GM12878 (cell line): ENCODE measurements at regions of chr13 and their contacts with region 1.

Region 1: GRCh38 chr13:110455941-110456340 is 105.6 kb downstream of the RAB20 start:
- DNase-seq: no peak
- ATAC-seq: peak; percentile 99
- H3K4me3 ChIP-seq: 0 out of 2 replicates have a peak overlapping the region, but pooled peaks have one; percentile 18
- H3K27ac ChIP-seq: no peak overlapping the region
- H3K4me1 ChIP-seq: peaks cover 4% of the 10 kb centered on the region; the same call in 1 of the 2 replicates
- H3K27me3 ChIP-seq: no peaks in the 10 kb centered on the region
- CTCF ChIP-seq: peak; percentile 91 to 95 (median 95); a peak in 5 of 6 replicates
- EP300 ChIP-seq: no peak
- POLR2A ChIP-seq: no peak
- RAD21 ChIP-seq: peak; percentile 95

Region 2: DNA sequence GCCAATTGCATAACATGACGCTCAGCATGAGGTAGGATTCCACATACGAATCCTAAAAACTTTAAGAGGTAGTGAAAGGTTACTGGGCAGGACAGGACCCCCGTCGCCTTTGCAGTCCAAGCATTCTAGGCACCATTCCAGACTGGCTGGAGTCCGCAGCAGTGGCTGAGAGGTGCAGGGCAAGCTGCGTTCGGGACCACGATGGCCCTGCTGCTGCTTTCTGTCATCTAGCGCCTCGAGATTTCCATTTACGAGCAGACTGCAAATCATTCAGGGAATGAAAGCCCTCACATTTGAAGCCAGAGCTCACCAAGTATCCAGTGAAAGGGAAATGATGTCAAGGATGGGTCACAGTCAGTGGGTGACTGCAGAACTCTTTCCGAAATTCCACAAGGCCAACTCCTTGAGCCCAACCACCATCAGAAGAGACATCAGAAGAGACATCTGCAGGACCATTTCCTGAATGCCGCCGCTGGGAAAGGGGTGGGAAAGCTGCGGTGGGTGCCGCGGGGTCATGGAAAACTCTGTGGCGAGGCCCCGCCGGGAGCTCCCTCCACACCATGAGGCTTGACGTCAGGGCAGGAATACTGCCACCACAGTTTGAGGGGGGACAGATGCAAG is 237.2 kb before region 1 on chr13:
- CTCF ChIA-PET with region 1: interaction called, 9 read pairs
- POLR2A ChIA-PET with region 1: no interaction called
- RAD21 ChIA-PET with region 1: interaction called, 15 read pairs
- SMC1A ChIA-PET with region 1: interaction called, 6 read pairs
- in situ Hi-C with region 1: no loop called
- intact Hi-C with region 1: no loop called
- DNase-seq: no peak
- ATAC-seq: no peak
- H3K4me3 ChIP-seq: no peak overlapping the region
- H3K27ac ChIP-seq: no peak overlapping the region
- H3K4me1 ChIP-seq: no peaks in the 10 kb centered on the region
- H3K27me3 ChIP-seq: peaks cover 0 to 3% of the 10 kb centered on the region in 2 experiments; a peak in 2 of 4 replicates
- CTCF ChIP-seq: no peak
- EP300 ChIP-seq: no peak
- POLR2A ChIP-seq: no peak
- RAD21 ChIP-seq: no peak

Region 3: GRCh38 chr13:110294146-110294545 is 161.8 kb before region 1 on chr13:
- CTCF ChIA-PET with region 1: no interaction called
- POLR2A ChIA-PET with region 1: no interaction called
- RAD21 ChIA-PET with region 1: no interaction called
- SMC1A ChIA-PET with region 1: no interaction called
- in situ Hi-C with region 1: no loop called
- intact Hi-C with region 1: no loop called
- DNase-seq: no peak
- ATAC-seq: no peak
- H3K4me3 ChIP-seq: no peak overlapping the region
- H3K27ac ChIP-seq: no peak overlapping the region
- H3K4me1 ChIP-seq: no peaks in the 10 kb centered on the region
- H3K27me3 ChIP-seq: peaks cover 3 to 7% of the 10 kb centered on the region in 2 experiments; a peak in 3 of 4 replicates
- CTCF ChIP-seq: no peak
- EP300 ChIP-seq: no peak
- POLR2A ChIP-seq: no peak
- RAD21 ChIP-seq: no peak

Region 4: DNA sequence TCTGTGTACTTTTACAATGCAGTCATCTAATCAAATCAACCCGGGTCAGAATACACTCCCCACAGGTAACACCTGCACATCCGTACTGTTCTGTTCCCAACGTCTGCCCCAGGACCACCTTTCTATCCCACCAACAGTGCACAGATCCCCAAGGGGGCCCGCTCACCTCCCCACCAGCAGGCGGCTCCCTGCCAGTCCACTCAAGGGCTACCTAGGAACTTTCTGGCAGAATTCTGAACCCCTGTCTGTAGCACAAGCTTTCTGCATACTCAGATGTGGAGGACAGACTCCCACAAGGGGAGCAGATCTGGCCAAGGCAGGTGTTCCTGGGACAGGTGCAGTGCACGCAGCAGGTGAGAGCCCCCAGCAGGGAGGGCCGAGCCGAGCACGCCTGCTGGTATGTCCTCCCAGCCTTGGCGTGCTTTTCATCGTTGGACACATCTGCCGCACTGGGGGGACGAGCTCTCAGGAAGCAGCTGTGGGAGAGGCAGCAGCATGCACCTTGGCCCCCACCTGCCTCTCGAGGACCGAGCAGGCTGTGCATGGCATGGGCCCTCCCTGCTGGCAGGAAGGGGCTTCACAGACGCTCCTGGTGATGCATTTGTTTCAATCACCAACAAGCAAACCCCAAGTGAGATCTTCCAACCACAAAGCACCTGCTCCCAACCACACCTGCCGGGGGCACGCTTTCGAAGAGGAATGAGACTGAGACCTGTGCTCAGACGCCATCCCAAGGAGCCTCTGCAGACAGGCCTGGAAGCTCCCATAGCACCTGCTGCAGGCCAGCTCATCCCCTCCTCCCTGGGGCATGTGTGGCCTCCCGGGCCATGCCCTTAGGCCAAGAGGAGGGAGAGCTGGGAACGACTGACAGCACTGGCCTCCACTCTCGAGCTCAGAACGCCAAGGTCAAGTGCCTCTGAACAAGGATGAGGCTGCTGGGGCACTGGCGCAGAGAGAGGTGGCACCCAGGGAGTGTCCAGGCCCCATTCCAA is 69.7 kb after region 1 on chr13:
- CTCF ChIA-PET with region 1: interaction called, 55 read pairs
- POLR2A ChIA-PET with region 1: interaction called, 5 read pairs
- RAD21 ChIA-PET with region 1: interaction called, 28 read pairs
- SMC1A ChIA-PET with region 1: interaction called, 38 read pairs
- in situ Hi-C with region 1: no loop called
- intact Hi-C with region 1: loop called (anchors 1 kb)
- DNase-seq: peak; percentile 35
- ATAC-seq: peak; percentile 90
- H3K4me3 ChIP-seq: no peak overlapping the region
- H3K27ac ChIP-seq: no peak overlapping the region
- H3K4me1 ChIP-seq: peaks cover 18% of the 10 kb centered on the region
- H3K27me3 ChIP-seq: no peaks in the 10 kb centered on the region
- CTCF ChIP-seq: peak; percentile 25 to 39 (median 26); a peak in 4 of 6 replicates
- EP300 ChIP-seq: peak in 1 of 2 experiments; percentile 60; a peak in 1 of 4 replicates
- POLR2A ChIP-seq: no peak
- RAD21 ChIP-seq: peak; percentile 63

Region 5: GRCh38 chr13:110561344-110562035 is 105.5 kb after region 1 on chr13 and contains the start of gene RAB20:
- CTCF ChIA-PET with region 1: interaction called, 19 read pairs
- POLR2A ChIA-PET with region 1: interaction called, 4 read pairs
- RAD21 ChIA-PET with region 1: interaction called, 9 read pairs
- SMC1A ChIA-PET with region 1: interaction called, 8 read pairs
- in situ Hi-C with region 1: no loop called
- intact Hi-C with region 1: loop called (anchors 2 kb)
- DNase-seq: no peak
- ATAC-seq: peak; percentile 75
- H3K4me3 ChIP-seq: peak within 1 kb of the TSS; percentile 91
- H3K27ac ChIP-seq: peak within 1 kb of the TSS; percentile 71
- H3K4me1 ChIP-seq: peaks cover 2% of the 10 kb centered on the region
- H3K27me3 ChIP-seq: no peaks in the 10 kb centered on the region
- CTCF ChIP-seq: no peak
- EP300 ChIP-seq: no peak
- POLR2A ChIP-seq: peak; percentile 61
- RAD21 ChIP-seq: peak; percentile 7; the same call in 1 of the 2 replicates
- polyA plus RNA-seq, gene RAB20: 0.48 to 2.1 TPM

Region 6: GRCh38 chr13:110593430-110594130 is 137.6 kb after region 1 on chr13:
- CTCF ChIA-PET with region 1: interaction called, 27 read pairs
- POLR2A ChIA-PET with region 1: no interaction called
- RAD21 ChIA-PET with region 1: interaction called, 16 read pairs
- SMC1A ChIA-PET with region 1: interaction called, 17 read pairs
- in situ Hi-C with region 1: no loop called
- intact Hi-C with region 1: loop called (anchors 1 kb)
- DNase-seq: no peak
- ATAC-seq: peak; percentile 97
- H3K4me3 ChIP-seq: no peak overlapping the region
- H3K27ac ChIP-seq: no peak overlapping the region
- H3K4me1 ChIP-seq: no peaks in the 10 kb centered on the region
- H3K27me3 ChIP-seq: no peaks in the 10 kb centered on the region
- CTCF ChIP-seq: peak; percentile 60 to 71 (median 66)
- EP300 ChIP-seq: no peak
- POLR2A ChIP-seq: no peak
- RAD21 ChIP-seq: peak; percentile 86

Region 7: DNA sequence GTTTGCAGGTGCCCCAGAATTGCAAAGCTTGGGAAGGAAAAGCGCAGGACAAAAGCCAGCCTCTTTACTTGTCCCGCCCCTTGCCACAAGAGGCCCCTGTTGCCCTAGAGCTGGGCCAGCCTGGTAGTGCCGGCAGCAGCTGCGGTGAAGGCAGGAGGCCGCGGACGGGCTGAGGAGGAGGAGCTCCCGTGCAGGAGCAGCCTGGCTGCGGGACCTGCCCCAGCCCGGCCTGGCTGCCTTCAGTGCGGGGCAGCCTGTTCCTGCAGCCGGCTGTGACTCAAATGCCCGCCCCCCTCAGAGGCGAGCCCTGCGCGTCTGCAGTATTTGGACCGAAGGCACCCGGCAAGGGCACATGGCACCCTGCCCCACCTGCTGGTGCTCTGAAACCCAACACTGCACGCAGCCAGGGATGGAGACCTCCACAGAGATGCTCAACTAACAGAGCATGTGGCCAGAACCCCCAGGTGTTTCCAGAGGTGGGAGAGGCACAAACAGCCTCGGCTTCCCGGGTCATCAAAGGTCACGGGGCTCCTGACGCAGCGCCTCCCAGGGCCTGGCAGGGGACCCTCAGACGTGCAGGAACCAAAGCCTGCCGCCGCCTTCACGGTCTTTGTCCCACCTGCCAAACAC is 189.1 kb after region 1 on chr13:
- CTCF ChIA-PET with region 1: interaction called, 5 read pairs
- POLR2A ChIA-PET with region 1: no interaction called
- RAD21 ChIA-PET with region 1: interaction called, 10 read pairs
- SMC1A ChIA-PET with region 1: no interaction called
- in situ Hi-C with region 1: no loop called
- intact Hi-C with region 1: no loop called
- DNase-seq: no peak
- ATAC-seq: peak; percentile 87
- H3K4me3 ChIP-seq: no peak overlapping the region
- H3K27ac ChIP-seq: no peak overlapping the region; the same call in 1 of the 2 replicates
- H3K4me1 ChIP-seq: 0 out of 2 replicates have a peak, but pooled peaks cover 3% of the 10 kb centered on the region
- H3K27me3 ChIP-seq: no peaks in the 10 kb centered on the region
- CTCF ChIP-seq: peak; percentile 46 to 54 (median 48); a peak in 5 of 6 replicates
- EP300 ChIP-seq: no peak
- POLR2A ChIP-seq: peak; percentile 37; the same call in 1 of the 2 replicates
- RAD21 ChIP-seq: peak; percentile 86